Ascending aorta (tissue), 2 donors: ENCODE measurements at regions of chr6 and their contacts with region 1.

Region 1: GRCh38 chr6:133923938-133924593 is 29.0 kb upstream of the TBPL1 start:
- DNase-seq: peak in 1 of 2 donors; percentile 81
- H3K4me3 ChIP-seq: no peak overlapping the region
- H3K27ac ChIP-seq: no peak overlapping the region
- H3K4me1 ChIP-seq: no peaks in the 10 kb centered on the region
- H3K27me3 ChIP-seq: no peaks in the 10 kb centered on the region
- CTCF ChIP-seq: peak; percentile 83 to 84 (median 84)

Region 2: DNA sequence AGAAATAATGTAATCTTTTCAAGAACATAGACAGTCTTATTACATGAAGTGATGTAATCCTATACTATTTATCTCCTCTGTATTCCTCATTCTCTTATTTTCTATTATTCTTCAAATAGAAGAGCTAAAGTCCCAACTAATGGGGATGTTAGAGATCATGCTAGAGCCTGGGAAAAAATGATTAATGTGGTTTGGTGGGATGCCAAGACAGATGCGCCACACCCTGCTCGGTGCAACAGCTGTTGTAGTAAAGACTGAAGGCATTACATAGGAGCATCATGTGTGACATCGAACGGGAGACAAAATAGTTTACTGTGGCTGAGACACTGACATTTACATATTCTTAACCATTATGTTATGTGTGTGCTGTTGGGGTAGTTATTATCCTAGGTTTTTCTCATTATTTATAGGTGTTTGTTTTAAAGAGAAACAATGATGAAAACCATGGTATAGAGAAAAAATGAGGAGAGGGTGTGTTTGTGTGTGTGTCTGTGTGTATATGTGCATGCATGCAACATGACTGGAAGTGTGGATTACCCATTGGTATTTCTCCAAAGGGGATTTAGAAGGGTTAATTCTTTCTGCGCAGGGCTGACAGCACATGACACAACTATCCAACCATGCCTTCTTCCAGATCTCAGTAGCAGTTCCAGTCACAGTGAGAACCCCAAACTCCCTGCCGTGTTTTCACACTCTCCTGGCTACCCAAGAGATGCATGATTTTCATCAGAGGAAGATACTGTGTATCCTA is 527.7 kb before region 1 on chr6:
- intact Hi-C with region 1: no loop called
- DNase-seq: no peak
- H3K4me3 ChIP-seq: no peak overlapping the region
- H3K27ac ChIP-seq: no peak overlapping the region
- H3K4me1 ChIP-seq: no peaks in the 10 kb centered on the region
- H3K27me3 ChIP-seq: no peaks in the 10 kb centered on the region
- CTCF ChIP-seq: no peak

Region 3: DNA sequence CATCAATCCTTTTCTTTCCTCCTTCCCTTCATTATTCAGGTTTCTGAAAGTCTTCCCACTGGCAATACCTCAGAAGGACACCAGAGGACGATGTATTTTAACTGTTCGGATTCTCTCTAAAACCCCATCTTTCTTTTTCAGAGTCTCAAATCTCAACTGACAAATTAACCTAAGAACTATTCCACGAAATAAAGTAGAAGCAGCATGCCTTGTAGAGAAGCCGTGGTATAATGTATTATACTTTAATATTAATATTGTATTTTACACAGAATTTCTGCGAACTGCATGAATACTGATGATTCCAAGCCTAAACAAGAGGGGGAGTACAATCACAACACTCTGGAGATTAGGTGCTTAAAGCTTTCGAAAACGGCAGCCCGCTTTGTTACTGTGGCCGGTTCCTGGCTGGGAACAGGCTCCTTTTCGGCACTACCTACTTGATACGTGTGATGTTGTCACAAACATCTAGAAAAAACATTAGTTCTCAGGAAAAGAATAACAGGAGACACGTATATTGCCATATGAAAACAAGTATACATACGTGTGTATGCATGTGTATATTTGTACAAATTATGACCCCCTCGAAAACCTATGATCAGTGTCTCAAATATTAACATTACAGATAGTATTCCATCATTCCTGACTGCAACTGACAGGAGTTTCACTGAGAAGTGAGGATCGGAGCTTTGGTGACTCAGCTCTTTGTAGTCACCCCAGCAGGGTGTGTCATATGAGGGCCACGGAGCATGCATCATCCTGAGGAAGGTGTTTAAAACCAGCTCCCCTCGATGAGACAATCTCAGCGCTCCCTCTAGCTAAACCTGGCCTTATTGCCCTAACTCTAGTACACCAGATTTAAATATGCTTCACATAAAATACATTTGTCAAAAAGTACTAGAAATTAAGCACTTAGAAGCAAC is 354.8 kb before region 1 on chr6:
- intact Hi-C with region 1: loop called (anchors 1 kb)
- DNase-seq: no peak
- H3K4me3 ChIP-seq: peak overlapping the region; percentile 24 to 60
- H3K27ac ChIP-seq: no peak overlapping the region
- H3K4me1 ChIP-seq: no peaks in the 10 kb centered on the region
- H3K27me3 ChIP-seq: no peaks in the 10 kb centered on the region
- CTCF ChIP-seq: peak; percentile 84 to 97 (median 93)

Region 4: GRCh38 chr6:133952815-133953633 is 29.0 kb after region 1 on chr6 and contains the start of gene TBPL1:
- intact Hi-C with region 1: loop called (anchors 2 kb)
- DNase-seq: peak; percentile 85 to 97
- H3K4me3 ChIP-seq: peak within 1 kb of the TSS; percentile 78 to 83
- H3K27ac ChIP-seq: peak within 1 kb of the TSS; percentile 96 to 97
- H3K4me1 ChIP-seq: peaks cover 0 to 9% of the 10 kb centered on the region in 2 donors
- H3K27me3 ChIP-seq: no peaks in the 10 kb centered on the region
- CTCF ChIP-seq: no peak
- total RNA-seq, gene TBPL1: 23.1 TPM

Region 5: DNA sequence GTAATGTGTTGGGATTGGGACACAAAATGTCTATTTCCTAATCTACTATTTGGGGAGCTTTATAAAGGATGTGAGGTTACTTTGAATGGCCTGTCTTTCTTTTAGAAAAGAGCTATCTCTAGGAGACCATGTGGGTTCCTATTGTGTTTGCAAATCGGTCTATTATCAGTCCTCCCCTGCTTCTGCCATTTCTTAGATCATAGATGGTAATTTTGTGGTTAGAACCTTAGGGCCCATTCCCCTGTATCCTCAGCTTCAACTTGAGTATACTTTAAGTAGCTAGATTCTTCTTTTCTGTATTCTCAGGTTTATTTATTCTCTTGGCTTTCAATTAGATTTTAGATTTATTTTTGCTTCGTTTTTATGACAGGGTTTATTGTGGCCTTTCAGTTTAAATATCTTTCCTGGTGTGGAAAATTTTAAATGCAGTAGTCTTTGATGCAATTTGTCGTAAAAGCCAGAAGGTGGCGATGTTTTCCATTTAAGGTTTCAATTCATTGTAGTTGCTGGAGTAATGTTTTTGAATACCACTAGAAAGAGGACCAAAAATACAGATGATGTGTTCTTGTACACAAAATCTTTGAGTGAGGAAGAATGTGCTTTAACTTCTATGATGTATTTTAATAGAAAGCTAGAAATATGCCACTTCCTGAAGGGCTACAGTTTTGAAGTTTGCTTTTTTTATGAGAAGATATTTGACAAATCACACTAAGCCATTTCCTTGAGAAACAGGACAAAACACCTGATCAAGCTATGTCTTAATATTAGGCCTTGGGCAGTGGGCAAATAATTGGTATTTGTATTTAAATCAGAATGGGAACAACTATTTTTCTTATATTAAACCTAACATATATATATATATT is 49.3 kb after region 1 on chr6:
- intact Hi-C with region 1: loop called (anchors 2 kb)
- DNase-seq: no peak
- H3K4me3 ChIP-seq: no peak overlapping the region
- H3K27ac ChIP-seq: peak overlapping the region in 1 of 2 donors; percentile 4
- H3K4me1 ChIP-seq: peaks cover 0 to 6% of the 10 kb centered on the region in 2 donors
- H3K27me3 ChIP-seq: no peaks in the 10 kb centered on the region
- CTCF ChIP-seq: peak in 2 of 3 experiments; percentile 76 to 77

Region 6: DNA sequence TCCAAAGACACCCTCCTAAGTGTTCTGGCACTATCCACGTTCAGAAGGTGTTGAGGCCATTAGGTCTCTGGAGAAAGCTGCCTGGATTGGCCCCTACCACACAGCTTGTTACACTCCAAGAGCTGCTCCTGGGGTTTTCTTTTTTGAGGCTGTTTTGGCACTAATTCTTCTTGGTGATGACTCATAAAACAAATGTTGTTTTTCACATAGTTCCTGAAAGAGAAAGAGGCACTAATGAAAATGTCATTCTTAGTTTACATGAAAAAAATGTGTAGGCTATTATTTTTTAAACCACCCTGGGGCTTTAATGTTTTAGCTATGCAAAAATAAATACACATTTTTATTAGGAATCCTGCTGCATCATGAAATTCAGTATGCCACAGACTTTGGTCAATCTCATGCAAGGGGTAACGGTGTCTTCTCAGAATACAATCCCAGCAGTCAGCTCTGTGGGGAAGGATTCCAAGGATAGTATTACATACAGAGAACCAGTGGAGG is 67.1 kb after region 1 on chr6:
- intact Hi-C with region 1: no loop called
- DNase-seq: no peak
- H3K4me3 ChIP-seq: no peak overlapping the region
- H3K27ac ChIP-seq: peak overlapping the region; percentile 19 to 44
- H3K4me1 ChIP-seq: peaks cover 0 to 21% of the 10 kb centered on the region in 2 donors
- H3K27me3 ChIP-seq: no peaks in the 10 kb centered on the region
- CTCF ChIP-seq: no peak

Region 7: DNA sequence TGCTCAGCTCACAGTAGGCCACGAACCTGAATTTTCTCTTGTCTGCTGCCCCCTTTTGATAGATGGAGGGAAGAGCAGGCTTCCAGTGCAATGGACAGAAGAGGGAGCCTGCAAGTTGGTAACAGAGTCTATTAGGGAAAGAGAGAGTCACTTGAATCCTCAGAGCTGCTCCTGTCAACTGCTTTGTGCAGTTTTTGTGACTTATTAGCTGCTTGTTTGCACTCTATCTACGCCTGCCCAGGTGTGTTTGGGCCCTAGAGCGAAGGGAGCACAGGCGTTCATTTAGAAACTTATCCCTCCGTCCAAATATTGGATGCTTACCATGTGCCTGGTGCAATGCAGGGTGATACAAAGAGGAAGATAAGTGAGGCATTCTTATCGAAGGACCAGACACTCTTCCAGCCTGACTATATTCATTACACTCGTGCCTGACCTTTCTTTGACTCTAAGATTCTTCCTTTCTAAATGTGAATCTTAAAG is 139.9 kb after region 1 on chr6:
- intact Hi-C with region 1: loop called (anchors 1 kb)
- DNase-seq: peak in 1 of 2 donors; percentile 84
- H3K4me3 ChIP-seq: no peak overlapping the region
- H3K27ac ChIP-seq: no peak overlapping the region
- H3K4me1 ChIP-seq: peaks cover 10 to 21% of the 10 kb centered on the region in 2 donors
- H3K27me3 ChIP-seq: no peaks in the 10 kb centered on the region
- CTCF ChIP-seq: peak; percentile 66 to 90 (median 88)

Region 8: GRCh38 chr6:134097114-134097707 is 173.1 kb after region 1 on chr6:
- intact Hi-C with region 1: loop called (anchors 1 kb)
- DNase-seq: peak in 1 of 2 donors; percentile 80
- H3K4me3 ChIP-seq: no peak overlapping the region
- H3K27ac ChIP-seq: no peak overlapping the region
- H3K4me1 ChIP-seq: no peaks in the 10 kb centered on the region
- H3K27me3 ChIP-seq: no peaks in the 10 kb centered on the region
- CTCF ChIP-seq: peak; percentile 31 to 76 (median 54)